A673 (cell line): ENCODE measurements at regions of chr6 and their contacts with region 1.

Region 1: DNA sequence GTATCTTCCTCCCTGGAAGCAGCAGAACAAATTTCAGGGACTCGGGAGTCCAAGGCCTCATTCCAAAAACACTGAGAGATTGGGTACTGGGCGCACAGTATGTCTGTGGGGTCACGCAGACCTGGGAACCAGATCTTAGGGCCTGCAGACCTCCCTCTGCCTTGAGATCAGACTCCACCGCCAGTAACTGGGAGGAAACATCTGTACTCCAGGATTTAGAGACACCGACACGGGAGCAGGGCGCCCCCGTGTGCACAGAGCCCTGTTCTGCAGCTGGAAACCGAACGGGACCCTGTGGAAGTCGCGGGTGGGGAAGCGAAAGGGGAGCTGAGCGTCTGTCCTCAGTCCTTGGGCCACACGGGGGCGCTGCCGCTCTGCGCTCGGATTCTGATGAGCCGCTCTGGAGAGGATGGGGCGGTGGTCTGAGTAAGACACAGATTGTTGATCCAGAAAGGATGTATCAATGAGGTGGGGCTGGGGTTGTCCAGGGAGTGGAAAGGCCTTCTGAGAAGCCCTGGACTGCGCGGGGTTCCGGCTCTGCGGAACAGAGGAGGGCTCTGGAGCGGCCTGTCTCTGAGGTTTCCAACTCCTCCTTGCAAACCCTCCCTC is 35.7 kb upstream of the HLA-E start:
- DNase-seq: peak; percentile 97
- H3K4me3 ChIP-seq: no peak overlapping the region
- H3K27ac ChIP-seq: no peak overlapping the region
- H3K4me1 ChIP-seq: no peaks in the 10 kb centered on the region
- H3K27me3 ChIP-seq: peaks cover 56% of the 10 kb centered on the region
- CTCF ChIP-seq: peak; percentile 98

Region 2: GRCh38 chr6:30411515-30412207 is 42.0 kb before region 1 on chr6:
- CTCF ChIA-PET with region 1: interaction called, 4 read pairs
- POLR2A ChIA-PET with region 1: no interaction called
- intact Hi-C with region 1: loop called (anchors 5 kb)
- DNase-seq: peak; percentile 74
- H3K4me3 ChIP-seq: no peak overlapping the region
- H3K27ac ChIP-seq: no peak overlapping the region
- H3K4me1 ChIP-seq: no peaks in the 10 kb centered on the region
- H3K27me3 ChIP-seq: peaks cover 65% of the 10 kb centered on the region
- CTCF ChIP-seq: peak; percentile 77

Region 3: DNA sequence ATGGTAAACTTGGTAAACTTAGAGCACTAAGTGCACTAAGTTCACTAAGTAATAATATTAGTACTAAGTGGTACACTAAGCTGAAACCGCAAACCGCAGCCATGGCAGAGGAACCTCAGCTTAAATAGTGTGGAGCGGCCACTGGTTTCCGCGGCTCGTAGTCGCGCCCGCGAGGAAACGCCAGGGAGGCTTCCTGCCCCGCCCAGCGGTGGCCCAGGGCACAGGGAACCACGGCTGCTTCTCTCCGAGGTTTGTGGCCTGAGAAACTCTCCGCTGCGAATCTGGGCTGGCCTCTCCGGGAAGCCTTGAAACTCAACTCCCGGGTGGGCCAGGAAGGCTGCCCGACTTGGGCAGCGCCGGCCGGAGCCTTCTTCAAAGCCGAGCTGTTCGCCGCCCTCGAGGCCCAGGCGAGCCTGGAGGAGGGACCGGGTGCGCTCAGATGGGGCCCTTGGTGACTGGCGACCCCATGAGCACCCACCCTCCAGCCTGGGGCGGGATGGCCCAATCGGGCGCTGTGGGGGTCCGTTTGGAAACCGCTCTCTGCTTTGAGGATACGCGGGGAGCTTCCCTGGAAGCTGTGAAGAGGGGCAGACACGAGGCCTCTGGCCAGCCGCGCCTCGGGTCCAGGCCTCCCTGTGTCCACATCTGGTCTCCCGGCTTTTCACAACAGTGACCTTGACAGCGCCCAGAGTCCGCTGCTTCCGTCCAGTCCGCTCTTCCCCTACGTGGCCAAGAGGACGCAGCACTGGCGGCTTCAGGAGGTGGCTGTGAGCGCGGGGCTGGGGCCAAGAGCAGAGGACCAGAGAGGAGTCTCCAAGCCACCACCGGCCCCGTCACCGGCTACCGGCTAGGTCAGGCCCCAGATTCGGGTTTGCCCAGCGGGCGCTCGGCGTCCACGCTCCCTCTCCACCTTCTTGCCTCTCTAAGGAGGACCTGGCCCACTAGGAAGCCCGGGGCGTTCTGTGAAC is 10.3 kb after region 1 on chr6:
- CTCF ChIA-PET with region 1: interaction called, 21 read pairs
- POLR2A ChIA-PET with region 1: no interaction called
- intact Hi-C with region 1: no loop called
- DNase-seq: peak; percentile 63
- H3K4me3 ChIP-seq: no peak overlapping the region
- H3K27ac ChIP-seq: no peak overlapping the region
- H3K4me1 ChIP-seq: peaks cover 15% of the 10 kb centered on the region
- H3K27me3 ChIP-seq: peaks cover 96% of the 10 kb centered on the region
- CTCF ChIP-seq: no peak